ENCODE measurements at regions of chr2 and their contacts with region 1.

Region 1: GRCh38 chr2:176638167-176639015 is 369.1 kb downstream of the MTX2 start:
- DNase-seq: no peak

Region 2: GRCh38 chr2:176126929-176127773 is 511.2 kb before region 1 on chr2:
- intact Hi-C with region 1: loop called (anchors 2 kb)
- DNase-seq: no peak

Region 3: GRCh38 chr2:176140513-176141317 is 497.7 kb before region 1 on chr2:
- intact Hi-C with region 1: loop called (anchors 5 kb)
- DNase-seq: peak; percentile 79

Region 4: DNA sequence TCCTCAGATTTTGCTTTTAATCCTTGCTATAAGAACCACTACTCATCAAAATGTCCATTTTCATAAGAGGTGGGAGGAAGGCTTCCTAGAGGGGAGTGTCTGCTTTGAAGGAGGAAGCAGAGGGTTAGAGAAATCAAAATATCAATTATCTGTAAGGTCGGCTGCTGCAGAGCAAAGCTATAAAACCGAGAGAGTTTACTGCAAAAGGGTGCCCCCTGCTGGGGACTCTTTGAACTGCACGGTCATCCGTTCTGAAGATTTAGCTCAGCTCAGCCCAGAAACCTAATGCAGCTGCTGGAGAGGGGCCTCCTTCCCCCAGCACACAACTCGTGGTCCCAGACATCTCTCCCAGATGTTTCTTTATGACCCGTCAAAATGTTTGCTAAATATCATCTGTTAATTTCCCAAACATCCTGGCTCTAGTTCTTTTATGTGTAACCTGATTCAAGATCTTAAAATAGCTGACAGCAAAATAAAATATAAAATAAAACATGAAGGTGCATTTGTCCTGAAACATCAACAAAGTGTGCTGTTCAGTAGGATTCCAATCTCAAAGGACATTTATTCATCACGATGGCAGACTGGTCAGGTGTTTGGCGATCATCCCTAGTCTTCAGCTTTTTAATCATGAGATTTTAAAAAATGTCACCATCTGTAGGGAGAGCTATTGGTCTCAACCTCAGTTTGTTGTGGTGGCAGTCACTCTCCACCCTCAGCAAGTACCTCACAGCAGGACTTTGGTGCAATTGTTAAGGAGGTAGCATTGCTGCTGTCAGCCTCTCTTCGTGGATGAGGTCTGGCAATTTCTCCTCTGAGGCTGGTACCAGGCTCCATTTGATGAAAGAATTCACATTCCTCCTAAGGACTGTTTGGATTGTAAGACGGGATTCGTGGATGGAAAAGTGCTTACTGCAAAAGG is 183.2 kb before region 1 on chr2:
- intact Hi-C with region 1: loop called (anchors 5 kb)
- DNase-seq: peak; percentile 82

Region 5: GRCh38 chr2:176554101-176555048 is 84.0 kb before region 1 on chr2:
- intact Hi-C with region 1: loop called (anchors 5 kb)
- DNase-seq: no peak

Region 6: DNA sequence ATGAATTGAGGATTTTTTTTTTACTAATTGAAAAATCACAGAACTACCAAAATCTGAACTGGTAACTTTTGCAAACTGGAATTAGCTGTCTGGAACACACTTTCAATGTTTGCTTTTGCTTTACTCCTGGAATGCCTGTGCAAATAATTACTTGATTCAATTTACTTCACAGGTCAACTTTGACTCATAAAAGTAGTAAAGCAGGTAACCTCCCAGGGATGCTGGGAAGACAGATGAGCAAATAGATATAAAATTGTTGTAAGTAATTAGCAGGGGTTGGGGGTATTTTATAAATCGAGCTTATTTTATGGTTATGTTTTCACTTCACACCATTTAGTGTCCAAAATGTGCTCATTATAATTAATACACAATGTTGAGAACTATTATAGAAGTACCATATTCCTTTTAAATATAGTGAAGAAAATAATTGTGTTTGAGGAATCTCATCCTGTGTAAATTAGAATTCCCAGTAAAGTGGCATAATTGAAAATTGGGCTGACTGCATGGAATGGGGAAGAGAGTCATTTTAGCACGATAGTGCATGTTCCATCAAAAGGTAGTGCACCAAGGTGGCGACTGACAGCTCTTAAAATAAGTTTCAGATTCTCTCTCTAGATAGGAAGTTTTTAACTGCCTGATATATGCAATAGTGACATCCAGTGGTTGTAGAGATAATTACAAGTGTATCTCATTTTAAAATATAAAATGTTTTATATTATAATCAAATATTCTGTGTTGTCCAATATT is 176.1 kb after region 1 on chr2:
- intact Hi-C with region 1: loop called (anchors 5 kb)
- DNase-seq: no peak

Region 7: GRCh38 chr2:177148477-177149154 is 510.2 kb after region 1 on chr2:
- intact Hi-C with region 1: loop called (anchors 5 kb)
- DNase-seq: peak; percentile 84